Testis (tissue), 5 donors: ENCODE measurements at regions of chr17 and their contacts with region 1.

Region 1: DNA sequence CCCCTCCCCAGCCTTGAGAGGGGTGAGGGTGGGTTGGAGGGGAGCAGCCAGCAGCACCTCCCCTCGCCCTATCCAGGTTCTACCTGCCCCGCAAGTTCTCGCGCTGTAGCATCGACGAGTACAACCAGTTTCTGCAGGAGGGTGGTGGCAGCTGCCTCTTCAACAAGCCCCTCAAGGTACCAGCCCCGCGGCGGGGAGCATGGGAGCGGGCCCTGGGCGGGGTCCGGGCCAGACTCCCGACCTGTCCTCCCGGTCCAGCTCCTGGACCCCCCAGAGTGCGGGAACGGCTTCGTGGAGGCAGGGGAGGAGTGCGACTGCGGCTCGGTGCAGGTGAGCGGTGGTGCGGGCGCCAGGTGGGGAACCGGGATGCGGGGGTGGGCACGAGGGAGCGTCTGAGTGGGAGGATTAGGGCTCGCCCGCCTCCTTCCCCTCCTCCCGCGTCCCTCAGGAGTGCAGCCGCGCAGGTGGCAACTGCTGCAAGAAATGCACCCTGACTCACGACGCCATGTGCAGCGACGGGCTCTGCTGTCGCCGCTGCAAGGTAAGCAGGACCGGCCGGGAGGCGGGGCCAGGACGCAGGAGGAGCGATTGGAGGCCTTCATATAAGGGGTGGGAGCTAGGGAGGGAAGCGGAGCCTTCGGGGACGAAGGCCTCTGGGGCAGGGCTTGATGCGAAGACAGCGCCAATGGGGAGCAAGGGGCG is 16.5 kb downstream of the ADAM11 start:
- DNase-seq: peak; percentile 97
- H3K4me3 ChIP-seq: peak overlapping the region; percentile 37 to 59
- H3K27ac ChIP-seq: no peak overlapping the region
- H3K4me1 ChIP-seq: peaks cover 6% of the 10 kb centered on the region
- H3K27me3 ChIP-seq: no peaks in the 10 kb centered on the region
- CTCF ChIP-seq: peak in 1 of 3 experiments; percentile 9
- POLR2A ChIP-seq: no peak

Region 2: DNA sequence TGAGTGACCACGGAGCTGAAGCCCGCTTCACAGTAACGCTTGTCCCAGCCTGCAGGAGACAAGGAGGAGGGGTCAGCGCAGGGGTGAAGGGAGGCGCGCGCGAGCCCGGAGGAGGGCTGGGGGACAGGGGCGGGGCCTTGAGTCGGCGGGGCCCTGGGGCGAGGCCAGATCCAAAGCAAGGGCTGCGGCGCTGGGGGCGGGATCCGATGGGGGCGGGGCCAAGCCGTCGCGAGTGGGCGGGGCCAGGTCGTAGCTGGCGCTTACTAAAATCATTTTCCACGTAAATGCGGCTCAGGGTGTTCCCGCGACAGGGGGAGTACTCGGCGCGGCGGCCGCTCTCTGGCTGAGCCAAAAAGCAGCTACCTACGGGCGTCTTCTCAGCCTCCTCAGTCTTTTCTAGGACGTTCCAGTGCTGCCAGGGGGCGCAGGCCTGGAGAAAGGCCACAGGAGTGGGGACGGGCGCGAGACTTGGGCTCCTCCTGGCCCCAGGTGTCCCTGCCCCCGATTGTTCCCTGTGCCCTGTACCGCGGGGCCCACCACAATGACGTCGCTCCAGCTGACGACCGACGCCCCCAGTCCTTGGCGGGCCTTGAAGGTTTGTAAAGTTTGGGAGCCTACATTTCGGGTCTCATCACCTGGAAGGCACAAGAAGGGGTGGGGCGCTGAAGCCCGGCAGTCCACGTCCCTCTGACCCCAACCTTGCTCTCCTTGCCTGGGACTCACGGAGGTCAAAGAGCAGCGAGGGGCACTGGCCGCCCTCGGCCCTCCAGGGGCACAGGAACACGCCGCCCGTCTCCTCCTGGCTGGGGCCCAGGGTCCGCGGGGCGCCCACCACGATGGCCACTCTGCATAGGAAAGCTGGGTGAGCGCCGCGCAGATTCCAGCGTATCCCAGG is 389.8 kb before region 1 on chr17:
- intact Hi-C with region 1: no loop called
- DNase-seq: peak; percentile 86
- H3K4me3 ChIP-seq: peak overlapping the region; percentile 52 to 54
- H3K27ac ChIP-seq: peak overlapping the region in 1 of 2 donors; percentile 50
- H3K4me1 ChIP-seq: peaks cover 7% of the 10 kb centered on the region
- H3K27me3 ChIP-seq: no peaks in the 10 kb centered on the region
- CTCF ChIP-seq: no peak
- POLR2A ChIP-seq: no peak

Region 3: GRCh38 chr17:44829523-44830358 is 54.5 kb after region 1 on chr17 and contains the start of gene GJC1:
- intact Hi-C with region 1: no loop called
- DNase-seq: peak; percentile 18
- H3K4me3 ChIP-seq: peak within 1 kb of the TSS; percentile 58 to 74
- H3K27ac ChIP-seq: peak within 1 kb of the TSS; percentile 67 to 83
- H3K4me1 ChIP-seq: no peaks in the 10 kb centered on the region
- H3K27me3 ChIP-seq: no peaks in the 10 kb centered on the region
- CTCF ChIP-seq: no peak
- POLR2A ChIP-seq: no peak
- total RNA-seq, gene GJC1: 16.9 to 21.0 TPM

Region 4: DNA sequence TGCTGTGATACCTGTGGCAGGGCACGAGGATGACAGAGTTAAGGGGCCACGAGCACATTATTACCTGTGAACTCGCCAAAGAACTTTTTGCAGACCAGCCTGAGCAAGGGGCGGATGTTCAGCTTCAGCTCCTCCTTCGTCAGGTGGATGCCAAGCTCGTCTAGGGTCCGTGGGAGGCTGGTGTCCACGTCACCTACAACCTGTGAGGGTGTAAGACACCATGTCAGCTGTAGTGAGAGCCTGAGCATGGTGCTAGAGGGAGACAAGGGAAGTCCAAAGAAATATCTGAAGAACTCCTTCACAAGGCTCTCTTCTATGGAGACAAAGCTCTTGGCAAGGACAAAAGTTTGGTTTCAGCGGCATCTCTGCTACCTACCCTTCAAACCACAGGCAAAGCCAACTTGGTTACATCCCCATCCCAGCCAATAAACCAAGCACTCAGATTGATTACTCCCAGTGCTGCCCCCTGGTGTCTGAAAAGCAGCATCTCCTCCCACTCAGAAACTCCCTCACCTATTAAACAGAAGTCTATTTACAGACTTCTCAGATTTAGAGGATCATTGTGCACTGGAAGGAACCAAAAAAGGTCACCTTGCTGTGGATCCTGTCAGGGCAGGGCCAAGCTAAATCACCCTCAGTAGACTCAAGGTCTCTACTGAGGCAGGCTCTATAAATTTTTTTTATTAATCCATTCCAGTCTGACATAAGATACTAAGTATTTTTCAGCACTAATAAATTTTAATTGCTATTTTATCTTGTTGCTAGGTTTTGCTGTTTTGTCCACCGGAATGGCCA is 89.8 kb after region 1 on chr17:
- intact Hi-C with region 1: loop called (anchors 5 kb)
- DNase-seq: peak; percentile 82
- H3K4me3 ChIP-seq: no peak overlapping the region
- H3K27ac ChIP-seq: no peak overlapping the region
- H3K4me1 ChIP-seq: no peaks in the 10 kb centered on the region
- H3K27me3 ChIP-seq: no peaks in the 10 kb centered on the region
- CTCF ChIP-seq: peak; percentile 88 to 89 (median 88)
- POLR2A ChIP-seq: no peak

Region 5: DNA sequence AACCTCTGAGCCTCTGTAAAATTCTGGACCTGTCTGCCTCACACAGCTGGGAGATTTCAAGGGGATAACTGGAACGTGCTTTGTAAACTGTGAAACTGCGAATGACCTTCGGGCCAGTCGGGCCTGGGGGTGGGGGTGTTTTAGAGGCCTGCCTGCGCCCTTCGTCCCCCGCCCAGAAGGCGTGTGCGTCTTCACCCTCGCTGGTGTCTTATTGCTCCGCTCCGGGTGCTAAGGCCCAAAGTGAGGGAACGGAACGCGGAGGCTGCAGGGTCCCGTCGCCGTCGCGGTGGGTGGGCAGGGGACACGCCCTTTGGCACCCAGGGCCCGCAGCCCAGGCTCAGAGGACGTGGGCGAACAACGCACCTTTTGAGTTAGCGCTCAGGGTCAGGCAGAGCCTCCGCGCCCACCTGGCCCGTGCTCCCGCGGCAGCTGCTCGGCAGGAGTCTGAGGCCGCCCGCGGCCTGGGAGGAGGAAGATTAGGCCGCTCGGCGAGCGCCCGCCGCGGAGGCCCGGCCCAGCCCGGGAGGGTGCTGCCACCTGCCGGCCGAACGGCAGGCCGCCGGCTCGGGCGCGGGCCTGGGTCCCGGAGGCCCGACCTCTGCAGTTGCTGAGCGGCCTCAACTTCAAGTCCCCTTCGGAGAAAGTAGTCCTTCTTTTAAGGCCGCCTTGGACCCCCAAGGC is 246.5 kb after region 1 on chr17:
- intact Hi-C with region 1: loop called (anchors 10 kb)
- DNase-seq: peak; percentile 60
- H3K4me3 ChIP-seq: peak overlapping the region; percentile 39 to 44
- H3K27ac ChIP-seq: peak overlapping the region; percentile 55 to 79
- H3K4me1 ChIP-seq: peaks cover 34% of the 10 kb centered on the region
- H3K27me3 ChIP-seq: no peaks in the 10 kb centered on the region
- CTCF ChIP-seq: peak; percentile 85 to 93 (median 88)
- POLR2A ChIP-seq: no peak

Region 6: GRCh38 chr17:45123930-45124796 is 348.9 kb after region 1 on chr17:
- intact Hi-C with region 1: loop called (anchors 10 kb)
- DNase-seq: no peak
- H3K4me3 ChIP-seq: no peak overlapping the region
- H3K27ac ChIP-seq: no peak overlapping the region
- H3K4me1 ChIP-seq: peaks cover 34% of the 10 kb centered on the region
- H3K27me3 ChIP-seq: no peaks in the 10 kb centered on the region
- CTCF ChIP-seq: no peak
- POLR2A ChIP-seq: no peak